ENCODE measurements at regions of chr2 and their contacts with region 1.

Region 1: DNA sequence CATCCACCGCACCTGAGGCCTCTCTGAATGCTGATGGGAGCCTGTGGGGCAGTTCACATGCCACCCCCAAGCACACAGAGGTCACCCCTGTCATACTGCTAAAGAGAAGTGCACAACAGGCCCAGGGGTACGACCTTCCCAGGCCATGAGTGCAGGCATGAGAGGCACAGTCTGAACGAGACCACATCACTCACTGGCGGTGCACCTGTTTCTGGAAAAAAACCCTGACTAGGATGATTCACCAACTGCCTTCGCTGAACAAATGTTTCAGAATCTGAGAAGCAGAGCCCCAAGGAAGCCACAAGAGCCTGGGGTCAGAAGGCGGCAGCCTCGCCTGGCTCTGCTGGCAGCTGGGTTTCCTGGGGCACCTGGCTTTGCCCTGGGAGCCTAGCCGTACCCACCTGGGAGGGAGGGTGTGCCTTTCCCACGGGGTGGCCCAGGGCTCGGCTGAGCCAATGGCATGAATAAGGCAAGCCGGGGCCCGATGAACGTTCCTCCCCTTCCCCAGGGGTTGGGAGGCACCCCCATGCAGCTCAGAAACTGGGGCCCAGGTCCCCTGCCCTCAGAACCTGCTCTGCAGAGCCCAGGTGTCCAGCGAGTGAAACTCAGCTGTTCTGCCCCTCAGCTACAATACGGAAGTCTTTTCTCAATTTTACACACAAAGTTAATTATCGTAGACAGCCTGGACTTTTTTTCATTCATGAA is 73.8 kb downstream of the HDAC4 start:
- DNase-seq: peak in 1 of 5 donors; percentile 16
- ATAC-seq: no peak
- H3K4me3 ChIP-seq: no peak overlapping the region
- H3K27ac ChIP-seq: peak overlapping the region in 11 of 12 donors; percentile 80 to 99 (median 91)
- H3K4me1 ChIP-seq: peaks cover 0 to 72% (median 53%) of the 10 kb centered on the region in 12 donors
- H3K27me3 ChIP-seq: no peaks in the 10 kb centered on the region
- CTCF ChIP-seq: no peak
- POLR2A ChIP-seq: no peak

Region 2: DNA sequence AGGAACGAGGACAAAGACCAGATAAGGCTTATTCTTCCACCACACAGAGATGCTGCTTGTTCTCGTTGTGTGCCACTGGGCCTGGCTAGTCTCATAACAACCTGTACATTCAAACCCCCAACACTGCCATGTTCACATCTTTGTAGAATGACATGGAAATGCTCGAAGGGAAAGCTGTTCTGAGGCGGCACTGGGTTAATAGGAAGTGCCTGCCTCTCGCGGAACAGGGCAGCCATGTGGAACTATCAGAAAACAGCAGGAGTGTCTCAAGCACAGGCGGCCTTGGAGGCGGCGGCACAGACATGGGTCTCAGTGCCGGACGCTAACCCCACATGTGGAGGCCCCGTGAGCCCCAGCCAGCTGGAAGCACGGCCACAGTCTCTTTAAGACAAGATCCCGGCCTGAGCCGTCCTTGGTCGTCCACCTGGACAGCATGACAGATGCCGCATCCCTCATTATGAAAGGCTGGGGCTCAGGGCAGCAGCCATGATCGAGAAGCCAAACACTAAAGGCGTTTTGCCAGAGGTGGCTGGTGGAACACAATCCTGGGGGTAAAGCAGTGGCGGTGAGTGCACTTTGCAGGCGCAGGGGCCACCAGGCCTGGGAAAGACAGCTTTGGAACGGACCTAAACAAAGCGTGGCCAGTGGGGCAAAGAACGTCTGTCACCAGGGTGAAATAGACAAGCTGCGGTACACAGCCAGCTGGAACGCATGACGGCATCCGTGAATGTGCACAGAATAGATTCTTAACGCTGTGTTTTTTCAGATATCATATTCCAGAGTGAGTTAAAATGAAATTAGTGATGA is 87.2 kb before region 1 on chr2:
- intact Hi-C with region 1: loop called in 1 of 10 experiments (anchors 5 kb)
- DNase-seq: peak in 2 of 5 donors; percentile 54 to 69
- ATAC-seq: peak; percentile 55 to 76 (median 71)
- H3K4me3 ChIP-seq: peak overlapping the region in 8 of 12 donors; percentile 4 to 36 (median 19)
- H3K27ac ChIP-seq: peak overlapping the region; percentile 6 to 90 (median 77)
- H3K4me1 ChIP-seq: peaks cover 2 to 72% (median 33%) of the 10 kb centered on the region in 12 donors
- H3K27me3 ChIP-seq: no peaks in the 10 kb centered on the region
- CTCF ChIP-seq: no peak
- POLR2A ChIP-seq: no peak

Region 3: DNA sequence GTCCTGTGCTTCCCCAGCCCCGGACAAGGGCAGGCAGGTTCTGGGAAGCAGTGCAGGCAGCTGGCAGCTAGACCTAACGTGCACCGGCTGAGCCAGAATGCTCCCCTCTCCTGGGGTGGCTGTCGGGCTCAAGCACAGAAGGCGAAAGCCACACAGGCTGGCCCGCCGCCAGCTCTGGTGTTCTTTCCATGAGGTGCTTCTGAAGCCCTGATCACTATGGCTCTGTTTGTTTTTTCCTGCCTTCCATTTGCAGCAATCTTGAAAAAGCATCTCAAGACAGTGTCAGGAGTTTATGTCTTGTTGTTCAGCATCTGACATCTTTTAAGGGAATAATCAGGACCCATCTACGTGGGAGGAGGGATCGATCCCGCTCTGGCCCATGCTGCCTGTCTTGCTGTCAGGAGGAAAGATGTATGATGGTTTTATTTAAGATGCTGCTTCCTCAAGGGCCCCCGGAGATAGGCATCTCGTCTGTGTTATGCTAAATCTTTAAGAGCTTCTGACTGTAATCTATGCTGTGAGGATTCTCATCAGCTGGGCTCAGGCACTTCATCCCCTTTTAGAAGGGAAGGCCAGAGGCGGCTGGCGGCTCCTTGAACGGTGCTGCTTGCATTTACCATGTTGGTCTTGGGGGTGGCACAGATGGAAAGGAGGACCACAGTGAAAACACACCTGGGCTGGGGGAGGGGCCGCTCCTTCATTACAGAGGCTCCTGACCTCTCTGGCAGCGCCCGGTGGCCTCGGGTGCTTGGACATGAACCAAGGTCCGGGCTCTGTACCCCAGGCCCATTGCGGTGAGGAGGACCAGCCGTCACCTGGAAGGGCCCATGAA is 192.3 kb after region 1 on chr2:
- intact Hi-C with region 1: no loop called
- DNase-seq: peak in 3 of 5 donors; percentile 69 to 80 (median 69)
- ATAC-seq: peak in 3 of 4 donors; percentile 7 to 68 (median 25)
- H3K4me3 ChIP-seq: no peak overlapping the region
- H3K27ac ChIP-seq: no peak overlapping the region
- H3K4me1 ChIP-seq: peaks cover 0 to 21% (median 0%) of the 10 kb centered on the region in 12 donors
- H3K27me3 ChIP-seq: peaks cover 0 to 8% (median 0%) of the 10 kb centered on the region in 9 donors
- CTCF ChIP-seq: no peak
- POLR2A ChIP-seq: no peak

Measured in heart left ventricle (tissue), 16 donors.